ENCODE measurements at regions of chr2 and their contacts with region 1.

Region 1: GRCh38 chr2:26959331-26959730 is 11.1 kb upstream of the MAPRE3 start:
- DNase-seq: no peak

Region 2: DNA sequence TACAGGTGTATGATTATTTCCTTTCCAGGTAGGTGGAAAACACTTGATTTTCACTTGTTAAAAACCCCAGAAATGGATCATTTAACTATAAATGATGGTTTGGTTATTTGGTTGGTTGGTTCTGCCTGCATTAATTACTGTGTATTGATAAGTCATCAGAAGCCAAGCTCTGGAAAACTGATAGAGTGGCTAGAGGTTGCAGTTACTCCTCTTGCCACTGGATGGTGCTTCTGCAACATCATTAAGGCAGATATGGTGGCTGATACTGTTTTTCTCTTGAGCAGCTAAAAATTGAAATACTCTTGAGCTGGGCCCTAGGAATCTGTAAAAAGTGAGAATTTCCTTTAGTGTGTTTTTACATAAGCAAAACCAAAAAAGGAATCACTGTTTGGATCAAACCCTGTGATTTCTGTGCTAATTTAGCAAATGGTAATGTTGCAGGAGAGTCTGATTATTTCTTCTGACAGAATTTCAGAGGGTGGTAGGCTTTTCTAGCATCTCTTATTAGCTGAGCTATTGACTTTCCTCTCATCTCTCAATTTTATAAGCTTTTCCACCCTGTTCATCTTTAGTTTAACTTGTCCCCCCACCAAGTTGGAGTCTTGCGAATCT is 871.2 kb before region 1 on chr2:
- intact Hi-C with region 1: no loop called
- DNase-seq: peak in 3 of 10 donors; percentile 24 to 33 (median 29)

Region 3: GRCh38 chr2:26577434-26578112 is 381.8 kb before region 1 on chr2:
- intact Hi-C with region 1: no loop called
- DNase-seq: peak in 9 of 10 donors; percentile 47 to 95 (median 73)

Region 4: GRCh38 chr2:26864226-26864625 is 95.1 kb before region 1 on chr2:
- intact Hi-C with region 1: no loop called
- DNase-seq: no peak

Region 5: GRCh38 chr2:27003857-27004256 is 44.5 kb after region 1 on chr2:
- intact Hi-C with region 1: no loop called
- DNase-seq: no peak

Region 6: DNA sequence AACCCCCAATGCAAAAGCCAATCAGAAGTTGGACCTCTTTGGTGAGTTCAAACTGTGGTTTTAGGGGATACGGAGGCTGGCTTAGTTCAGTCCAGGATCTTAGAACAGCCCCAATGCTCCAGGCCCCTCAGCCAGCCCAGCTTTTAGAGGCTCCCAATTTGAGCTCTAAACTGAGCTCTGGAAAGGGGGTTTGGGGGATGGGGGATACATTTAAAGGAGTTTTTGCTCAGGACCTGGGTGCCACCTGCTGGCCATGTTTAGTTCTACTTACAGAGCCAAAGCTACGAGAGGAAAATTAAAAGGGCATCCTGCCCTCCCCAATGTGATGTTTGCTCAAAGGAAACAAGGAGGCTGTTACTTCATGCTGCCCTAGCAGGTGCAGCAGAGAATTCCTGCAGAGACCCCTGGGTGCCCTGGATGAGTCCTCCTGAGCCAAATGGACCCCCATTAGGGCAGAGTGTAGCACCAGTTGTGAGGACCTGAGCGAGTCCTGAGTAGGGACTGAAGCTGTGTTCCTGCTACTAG is 57.5 kb after region 1 on chr2:
- intact Hi-C with region 1: loop called (anchors 1 kb)
- DNase-seq: peak in 6 of 10 donors; percentile 43 to 84 (median 53)